Adrenal gland (tissue), 19 donors: ENCODE measurements at regions of chr22 and their contacts with region 1.

Region 1: GRCh38 chr22:41966607-41967240 is 2.5 kb upstream of the SEPTIN3 start:
- DNase-seq: peak; percentile 75 to 93 (median 89)
- H3K4me3 ChIP-seq: no peak overlapping the region
- H3K27ac ChIP-seq: peak overlapping the region in 2 of 5 donors; percentile 64 to 74
- H3K4me1 ChIP-seq: no peaks in the 10 kb centered on the region
- H3K27me3 ChIP-seq: no peaks in the 10 kb centered on the region
- CTCF ChIP-seq: peak; percentile 34 to 72 (median 58)
- POLR2A ChIP-seq: no peak

Region 2: DNA sequence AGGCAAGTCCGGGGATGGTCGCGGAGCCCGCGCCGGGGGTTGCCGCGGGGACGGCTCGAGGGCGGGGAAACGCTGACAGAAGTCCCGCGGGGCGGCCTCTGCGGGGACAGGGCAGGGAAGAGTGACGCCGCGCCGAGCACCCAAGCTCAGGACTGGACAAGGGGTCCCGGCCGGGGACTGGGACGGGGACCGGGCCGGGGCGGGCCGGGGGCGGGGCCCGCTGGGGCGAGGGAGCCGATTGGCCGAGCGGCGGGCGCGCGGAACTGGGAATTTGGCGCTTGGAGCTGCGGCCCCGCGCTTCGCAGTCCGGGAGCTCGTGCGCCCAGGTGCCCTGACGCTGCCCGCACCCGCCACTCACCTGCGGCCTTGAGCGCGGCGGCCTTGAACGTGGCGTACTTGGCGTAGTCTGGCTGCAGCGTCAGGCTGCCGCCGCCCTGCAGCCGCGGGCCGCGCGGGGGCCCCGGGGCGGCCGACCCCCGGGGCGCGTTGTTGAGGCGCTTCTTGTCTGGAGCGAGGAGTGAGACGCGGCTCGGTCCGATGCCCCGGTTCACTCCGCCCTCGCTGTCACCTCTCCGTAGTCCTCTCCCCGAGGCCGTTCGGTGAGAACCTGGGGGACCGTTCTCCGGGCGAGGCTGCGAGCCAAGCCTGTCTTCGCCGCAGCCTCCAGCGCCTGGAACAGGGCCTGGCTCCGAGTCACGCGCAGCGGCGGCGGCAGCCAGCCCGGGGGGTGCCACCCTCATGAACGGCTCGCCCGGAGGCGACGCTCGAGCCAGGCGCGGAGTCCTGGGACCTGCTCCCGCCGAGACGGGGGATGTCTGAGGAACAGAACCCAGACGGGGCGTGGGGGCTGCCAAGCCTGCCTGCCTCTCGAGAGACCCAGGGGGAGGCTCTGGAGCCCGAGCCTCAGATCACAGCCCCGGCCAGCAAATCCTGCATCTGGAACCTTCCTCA is 56.4 kb before region 1 on chr22:
- intact Hi-C with region 1: no loop called
- DNase-seq: peak in 6 of 7 donors; percentile 68 to 76 (median 72)
- H3K4me3 ChIP-seq: peak overlapping the region in 1 of 4 donors; percentile 49
- H3K27ac ChIP-seq: peak overlapping the region in 4 of 5 donors; percentile 18 to 73 (median 62)
- H3K4me1 ChIP-seq: peaks cover 24 to 40% of the 10 kb centered on the region in 2 donors
- H3K27me3 ChIP-seq: peaks cover 9% of the 10 kb centered on the region
- CTCF ChIP-seq: no peak
- POLR2A ChIP-seq: no peak

Region 3: DNA sequence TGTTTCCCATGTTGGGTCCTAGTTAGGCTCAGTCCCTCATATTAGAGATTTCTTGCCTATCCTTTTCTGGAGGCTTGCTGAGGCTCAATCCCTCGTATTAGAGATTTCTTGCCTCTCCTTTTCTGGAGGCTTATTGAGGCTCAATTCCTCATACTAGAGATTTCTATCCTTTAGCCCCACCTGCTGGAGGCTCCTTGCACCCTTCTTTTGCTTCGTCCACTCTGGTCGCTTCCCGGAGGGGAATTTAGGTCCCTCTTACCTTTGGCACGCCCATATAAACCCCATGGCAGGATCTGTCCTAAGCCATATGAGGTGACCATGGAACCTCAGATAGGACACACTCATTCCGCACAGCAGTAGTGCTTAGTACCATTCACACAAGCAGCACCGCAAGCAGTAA is 148.0 kb after region 1 on chr22:
- intact Hi-C with region 1: loop called in 1 of 2 experiments (anchors 10 kb)
- DNase-seq: peak in 2 of 7 donors; percentile 28 to 46
- H3K4me3 ChIP-seq: no peak overlapping the region
- H3K27ac ChIP-seq: no peak overlapping the region
- H3K4me1 ChIP-seq: no peaks in the 10 kb centered on the region
- H3K27me3 ChIP-seq: no peaks in the 10 kb centered on the region
- CTCF ChIP-seq: peak in 4 of 6 experiments; percentile 18 to 42 (median 24)
- POLR2A ChIP-seq: no peak

Region 4: DNA sequence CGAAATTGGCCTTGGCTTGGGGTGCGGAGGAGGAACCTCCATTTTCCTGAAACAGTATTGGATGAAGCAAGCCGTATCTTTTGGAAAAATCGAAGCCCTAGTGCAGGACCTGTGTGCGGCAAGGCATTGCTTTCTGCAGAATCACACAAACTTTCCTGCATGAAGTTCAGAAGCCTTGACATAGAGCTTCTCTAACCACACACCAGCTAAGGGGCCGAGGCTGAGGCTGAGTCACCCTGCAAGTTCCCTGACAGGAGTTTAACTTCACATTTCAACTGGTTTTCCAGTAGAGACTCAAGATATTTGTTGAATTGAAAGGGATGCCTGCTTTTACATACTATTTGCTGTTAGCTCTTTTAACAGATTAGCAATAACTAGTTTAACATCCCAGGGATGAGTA is 235.9 kb after region 1 on chr22:
- intact Hi-C with region 1: no loop called
- DNase-seq: peak; percentile 43 to 78 (median 67)
- H3K4me3 ChIP-seq: no peak overlapping the region
- H3K27ac ChIP-seq: peak overlapping the region in 2 of 5 donors; percentile 16 to 27
- H3K4me1 ChIP-seq: peaks cover 7 to 20% of the 10 kb centered on the region in 2 donors
- H3K27me3 ChIP-seq: no peaks in the 10 kb centered on the region
- CTCF ChIP-seq: no peak
- POLR2A ChIP-seq: no peak